CD14-positive monocyte (primary cell): ENCODE measurements at regions of chr18 and their contacts with region 1.

Region 1: GRCh38 chr18:74597662-74598349 is at the start of gene ZNF407:
- DNase-seq: peak; percentile 81 to 85 (median 83)
- H3K4me3 ChIP-seq: peak within 1 kb of the TSS; percentile 85 to 97 (median 85)
- H3K4me3 Mint-ChIP-seq: peak within 1 kb of the TSS; percentile 91 to 95
- H3K27ac ChIP-seq: peak within 1 kb of the TSS; percentile 94 to 98
- H3K27ac Mint-ChIP-seq: peak within 1 kb of the TSS; percentile 96 to 99 (median 98)
- H3K4me1 ChIP-seq: peaks cover 37 to 45% of the 10 kb centered on the region in 2 donors
- H3K4me1 Mint-ChIP-seq: peaks cover 47% of the 10 kb centered on the region
- H3K27me3 ChIP-seq: no peaks in the 10 kb centered on the region
- H3K27me3 Mint-ChIP-seq: no peaks in the 10 kb centered on the region
- CTCF ChIP-seq: no peak
- polyA plus RNA-seq, gene ZNF407: 1.3 to 3.6 (median 1.6) TPM

Region 2: GRCh38 chr18:74242438-74243096 is 355.2 kb before region 1 on chr18:
- intact Hi-C with region 1: loop called in 1 of 2 experiments (anchors 10 kb)
- DNase-seq: no peak
- H3K4me3 ChIP-seq: no peak overlapping the region
- H3K4me3 Mint-ChIP-seq: no peak overlapping the region
- H3K27ac ChIP-seq: no peak overlapping the region
- H3K27ac Mint-ChIP-seq: no peak overlapping the region
- H3K4me1 ChIP-seq: no peaks in the 10 kb centered on the region
- H3K4me1 Mint-ChIP-seq: peaks cover 5% of the 10 kb centered on the region
- H3K27me3 ChIP-seq: no peaks in the 10 kb centered on the region
- H3K27me3 Mint-ChIP-seq: peaks cover 2 to 7% (median 5%) of the 10 kb centered on the region in 3 donors
- CTCF ChIP-seq: no peak

Region 3: GRCh38 chr18:74661691-74662090 is 63.9 kb after region 1 on chr18:
- intact Hi-C with region 1: no loop called
- DNase-seq: no peak
- H3K4me3 ChIP-seq: no peak overlapping the region
- H3K4me3 Mint-ChIP-seq: no peak overlapping the region
- H3K27ac ChIP-seq: no peak overlapping the region
- H3K27ac Mint-ChIP-seq: no peak overlapping the region
- H3K4me1 ChIP-seq: no peaks in the 10 kb centered on the region
- H3K4me1 Mint-ChIP-seq: peaks cover 4% of the 10 kb centered on the region
- H3K27me3 ChIP-seq: no peaks in the 10 kb centered on the region
- H3K27me3 Mint-ChIP-seq: no peaks in the 10 kb centered on the region
- CTCF ChIP-seq: no peak